ENCODE measurements at regions of chr16 and their contacts with region 1.

Region 1: GRCh38 chr16:74666425-74667254 is at the start of gene RFWD3:
- DNase-seq: peak; percentile 80 to 99 (median 97)
- ATAC-seq: peak; percentile 100
- H3K4me3 ChIP-seq: peak within 1 kb of the TSS; percentile 89
- H3K4me3 Mint-ChIP-seq: peak within 1 kb of the TSS; percentile 87 to 98 (median 95)
- H3K27ac ChIP-seq: peak within 1 kb of the TSS; percentile 86
- H3K27ac Mint-ChIP-seq: peak within 1 kb of the TSS; percentile 92 to 97 (median 95)
- H3K4me1 ChIP-seq: peaks cover 0 to 10% of the 10 kb centered on the region in 2 donors
- H3K4me1 Mint-ChIP-seq: peaks cover 26 to 48% (median 44%) of the 10 kb centered on the region in 7 donors
- H3K27me3 ChIP-seq: no peaks in the 10 kb centered on the region
- H3K27me3 Mint-ChIP-seq: peaks cover 0 to 2% (median 0%) of the 10 kb centered on the region in 5 donors
- total RNA-seq, gene RFWD3: 39.3 to 88.0 (median 56.9) TPM

Region 2: GRCh38 chr16:74372953-74373846 is 293.4 kb before region 1 on chr16:
- CTCF ChIA-PET with region 1: no interaction called
- POLR2A ChIA-PET with region 1: no interaction called
- intact Hi-C with region 1: loop called in 1 of 2 experiments (anchors 1 kb)
- DNase-seq: no peak
- ATAC-seq: no peak
- H3K4me3 ChIP-seq: no peak overlapping the region
- H3K4me3 Mint-ChIP-seq: no peak overlapping the region
- H3K27ac ChIP-seq: no peak overlapping the region
- H3K27ac Mint-ChIP-seq: peak overlapping the region in 2 of 9 donors; percentile 18 to 86
- H3K4me1 ChIP-seq: no peaks in the 10 kb centered on the region
- H3K4me1 Mint-ChIP-seq: peaks cover 0 to 4% (median 0%) of the 10 kb centered on the region in 7 donors
- H3K27me3 ChIP-seq: no peaks in the 10 kb centered on the region
- H3K27me3 Mint-ChIP-seq: no peaks in the 10 kb centered on the region

Region 3: GRCh38 chr16:74556375-74556922 is 110.2 kb before region 1 on chr16:
- CTCF ChIA-PET with region 1: no interaction called
- POLR2A ChIA-PET with region 1: no interaction called
- intact Hi-C with region 1: no loop called
- DNase-seq: no peak
- ATAC-seq: no peak
- H3K4me3 ChIP-seq: no peak overlapping the region
- H3K4me3 Mint-ChIP-seq: no peak overlapping the region
- H3K27ac ChIP-seq: no peak overlapping the region
- H3K27ac Mint-ChIP-seq: peak overlapping the region in 1 of 9 donors; percentile 89
- H3K4me1 ChIP-seq: peaks cover 6 to 28% of the 10 kb centered on the region in 2 donors
- H3K4me1 Mint-ChIP-seq: peaks cover 22 to 57% (median 49%) of the 10 kb centered on the region in 7 donors
- H3K27me3 ChIP-seq: no peaks in the 10 kb centered on the region
- H3K27me3 Mint-ChIP-seq: no peaks in the 10 kb centered on the region

Region 4: DNA sequence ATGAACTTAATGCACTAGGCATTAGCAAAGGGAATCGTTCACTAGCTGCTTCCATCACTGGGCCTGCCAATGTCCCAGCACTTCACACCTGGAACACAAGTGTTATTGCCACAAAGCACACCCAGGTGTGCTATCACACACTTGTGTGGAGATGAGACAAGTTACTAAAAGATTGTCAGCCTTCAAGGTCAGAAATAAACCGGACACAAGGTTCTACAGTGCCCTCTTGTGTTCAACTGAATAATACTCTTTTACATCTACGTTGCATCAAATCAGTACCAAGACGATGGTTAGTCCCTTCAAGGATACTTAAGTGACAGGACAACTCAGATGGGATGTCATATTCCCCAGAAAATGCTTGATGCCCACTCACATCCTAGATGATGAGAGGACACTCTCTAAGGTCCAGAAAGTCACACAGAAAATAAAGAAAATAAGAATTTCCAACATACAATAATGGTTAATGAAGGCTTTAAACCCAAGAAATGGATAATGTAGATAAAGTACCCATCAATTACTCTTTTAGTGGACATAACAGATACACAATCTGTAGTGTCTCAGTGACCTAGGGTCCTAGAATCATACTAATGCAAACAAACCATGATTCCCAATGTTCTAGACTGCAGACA is 43.3 kb before region 1 on chr16:
- CTCF ChIA-PET with region 1: no interaction called
- POLR2A ChIA-PET with region 1: no interaction called
- intact Hi-C with region 1: no loop called
- DNase-seq: peak in 6 of 9 donors; percentile 29 to 59 (median 53)
- ATAC-seq: peak; percentile 78
- H3K4me3 ChIP-seq: no peak overlapping the region
- H3K4me3 Mint-ChIP-seq: no peak overlapping the region
- H3K27ac ChIP-seq: no peak overlapping the region
- H3K27ac Mint-ChIP-seq: peak overlapping the region in 5 of 9 donors; percentile 20 to 78 (median 49)
- H3K4me1 ChIP-seq: no peaks in the 10 kb centered on the region
- H3K4me1 Mint-ChIP-seq: peaks cover 5 to 18% (median 9%) of the 10 kb centered on the region in 7 donors
- H3K27me3 ChIP-seq: no peaks in the 10 kb centered on the region
- H3K27me3 Mint-ChIP-seq: no peaks in the 10 kb centered on the region

Region 5: DNA sequence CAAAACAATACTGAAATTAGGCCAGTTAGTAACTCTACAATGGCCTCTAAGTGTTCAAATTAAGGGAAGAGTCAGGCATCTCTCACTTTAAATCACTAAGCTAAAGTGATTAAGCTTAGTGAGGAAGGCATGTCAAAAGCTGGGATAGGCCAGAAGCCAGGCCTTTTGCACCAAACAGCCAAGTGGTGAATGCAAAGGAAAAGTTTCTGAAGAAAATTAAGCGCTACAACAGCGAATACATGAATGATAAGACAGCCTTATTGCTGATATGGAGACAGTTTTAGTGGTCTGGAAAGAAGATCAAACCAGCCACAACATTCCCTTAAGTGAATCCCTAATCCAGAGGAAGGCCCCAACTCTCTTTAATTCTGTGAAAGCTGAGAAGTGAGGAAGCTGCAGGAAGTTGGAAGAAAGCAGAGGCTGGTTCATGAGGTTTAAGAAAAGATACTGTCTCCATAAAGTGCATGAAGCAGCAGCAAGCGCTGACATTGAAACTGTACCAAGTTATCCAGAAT is 12.0 kb before region 1 on chr16:
- CTCF ChIA-PET with region 1: no interaction called
- POLR2A ChIA-PET with region 1: interaction called, 10 read pairs
- intact Hi-C with region 1: no loop called
- DNase-seq: no peak
- ATAC-seq: no peak
- H3K4me3 ChIP-seq: no peak overlapping the region
- H3K4me3 Mint-ChIP-seq: peak overlapping the region in 2 of 10 donors; percentile 4 to 47
- H3K27ac ChIP-seq: peak overlapping the region; percentile 15
- H3K27ac Mint-ChIP-seq: peak overlapping the region; percentile 35 to 89 (median 54)
- H3K4me1 ChIP-seq: peaks cover 16 to 24% of the 10 kb centered on the region in 2 donors
- H3K4me1 Mint-ChIP-seq: peaks cover 41 to 76% (median 67%) of the 10 kb centered on the region in 7 donors
- H3K27me3 ChIP-seq: no peaks in the 10 kb centered on the region
- H3K27me3 Mint-ChIP-seq: no peaks in the 10 kb centered on the region

Region 6: DNA sequence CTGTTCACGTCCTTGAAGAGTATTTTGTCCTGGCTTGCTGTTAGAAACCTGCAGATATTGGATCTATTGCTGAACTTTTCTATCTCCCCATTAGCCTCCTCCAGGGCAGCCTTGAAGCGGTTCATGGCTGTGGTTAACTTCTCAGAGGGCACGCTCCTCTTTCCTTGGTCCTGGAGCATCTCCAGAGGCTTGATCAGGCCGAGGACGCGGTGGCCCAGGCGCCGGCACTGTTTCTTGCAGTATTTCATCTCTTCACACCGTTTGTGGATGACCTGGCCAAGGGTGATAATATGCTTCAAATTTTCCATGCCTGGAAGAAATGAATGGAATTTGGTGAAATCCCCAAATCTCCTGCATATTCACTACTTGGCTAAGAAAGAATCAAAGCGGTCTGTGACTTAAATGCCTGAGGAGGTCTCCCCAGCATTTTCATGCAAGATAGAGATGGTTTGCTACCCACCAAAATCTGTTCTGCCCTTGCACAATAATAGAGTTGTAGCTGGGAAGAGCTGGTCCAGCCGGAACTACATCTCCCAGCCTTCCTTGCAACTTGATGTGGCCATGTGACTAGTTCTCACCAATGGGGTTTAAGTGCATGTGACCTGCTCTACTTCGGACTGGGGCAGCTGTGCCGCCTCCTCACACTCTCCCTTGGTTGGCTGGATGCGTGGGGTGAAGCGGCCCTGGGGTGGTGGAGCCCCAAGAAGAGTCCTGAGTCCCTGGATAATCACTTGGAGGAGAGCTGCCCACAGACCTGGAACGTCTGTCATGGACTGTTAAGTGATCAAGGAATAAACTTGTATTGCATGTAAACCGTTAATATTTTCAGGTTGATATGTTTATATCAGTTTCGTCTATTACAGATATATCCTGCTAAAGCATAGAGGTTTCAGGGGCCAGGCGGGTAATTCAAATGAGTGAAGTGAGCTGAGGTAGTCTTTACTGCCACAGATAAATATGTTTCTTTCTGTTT is 29.1 kb after region 1 on chr16:
- CTCF ChIA-PET with region 1: no interaction called
- POLR2A ChIA-PET with region 1: interaction called, 18 read pairs
- intact Hi-C with region 1: loop called (anchors 1 kb)
- DNase-seq: peak; percentile 33 to 67 (median 51)
- ATAC-seq: peak; percentile 89
- H3K4me3 ChIP-seq: peak overlapping the region; percentile 45
- H3K4me3 Mint-ChIP-seq: peak overlapping the region; percentile 74 to 94 (median 85)
- H3K27ac ChIP-seq: peak overlapping the region; percentile 45
- H3K27ac Mint-ChIP-seq: peak overlapping the region in 8 of 9 donors; percentile 43 to 87 (median 80)
- H3K4me1 ChIP-seq: peaks cover 14 to 24% of the 10 kb centered on the region in 2 donors
- H3K4me1 Mint-ChIP-seq: peaks cover 35 to 74% (median 59%) of the 10 kb centered on the region in 7 donors
- H3K27me3 ChIP-seq: no peaks in the 10 kb centered on the region
- H3K27me3 Mint-ChIP-seq: no peaks in the 10 kb centered on the region

Region 7: GRCh38 chr16:74984535-74985296 is 318.1 kb after region 1 on chr16 and contains the start of gene WDR59:
- CTCF ChIA-PET with region 1: no interaction called
- POLR2A ChIA-PET with region 1: interaction called, 6 read pairs
- intact Hi-C with region 1: loop called (anchors 1 to 2 kb)
- DNase-seq: peak; percentile 87 to 99 (median 98)
- ATAC-seq: peak; percentile 100
- H3K4me3 ChIP-seq: peak within 1 kb of the TSS; percentile 98
- H3K4me3 Mint-ChIP-seq: peak within 1 kb of the TSS; percentile 90 to 98 (median 95)
- H3K27ac ChIP-seq: peak within 1 kb of the TSS; percentile 86
- H3K27ac Mint-ChIP-seq: peak within 1 kb of the TSS; percentile 72 to 96 (median 92)
- H3K4me1 ChIP-seq: peaks cover 5 to 6% of the 10 kb centered on the region in 2 donors
- H3K4me1 Mint-ChIP-seq: peaks cover 0 to 27% (median 23%) of the 10 kb centered on the region in 7 donors
- H3K27me3 ChIP-seq: no peaks in the 10 kb centered on the region
- H3K27me3 Mint-ChIP-seq: no peaks in the 10 kb centered on the region
- total RNA-seq, gene WDR59: 82.7 to 130 (median 84.7) TPM

Measured in naive thymus-derived CD4-positive, alpha-beta T cell (primary cell).